MCF 10A (cell line): ENCODE measurements at regions of chr20 and their contacts with region 1.

Region 1: DNA sequence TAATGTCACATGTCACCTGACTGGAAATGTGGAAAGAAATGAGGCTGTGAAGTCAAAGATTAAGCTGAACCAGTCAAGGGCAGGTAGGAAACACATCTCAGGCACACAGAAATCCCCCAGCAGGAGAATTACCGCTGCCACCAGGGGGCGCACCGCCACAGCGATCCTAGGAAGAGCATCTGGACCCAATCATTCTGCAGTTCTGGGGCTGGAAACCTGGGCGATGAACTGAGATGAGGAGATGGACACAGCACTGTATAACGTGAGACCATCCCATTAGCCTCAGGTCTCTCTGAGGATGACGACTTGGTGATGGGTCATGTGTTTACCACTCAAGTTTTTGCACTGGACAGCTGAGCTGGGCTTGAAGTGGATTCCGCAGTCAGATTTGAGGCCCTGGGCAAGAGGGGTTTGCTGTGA is 6.5 kb upstream of the SLC24A3 start:
- DNase-seq: peak; percentile 69
- H3K4me3 Mint-ChIP-seq: no peak overlapping the region
- H3K27ac Mint-ChIP-seq: no peak overlapping the region
- H3K4me1 Mint-ChIP-seq: no peaks in the 10 kb centered on the region
- H3K27me3 Mint-ChIP-seq: peaks cover 25% of the 10 kb centered on the region
- CTCF ChIP-seq: peak; percentile 84

Region 2: DNA sequence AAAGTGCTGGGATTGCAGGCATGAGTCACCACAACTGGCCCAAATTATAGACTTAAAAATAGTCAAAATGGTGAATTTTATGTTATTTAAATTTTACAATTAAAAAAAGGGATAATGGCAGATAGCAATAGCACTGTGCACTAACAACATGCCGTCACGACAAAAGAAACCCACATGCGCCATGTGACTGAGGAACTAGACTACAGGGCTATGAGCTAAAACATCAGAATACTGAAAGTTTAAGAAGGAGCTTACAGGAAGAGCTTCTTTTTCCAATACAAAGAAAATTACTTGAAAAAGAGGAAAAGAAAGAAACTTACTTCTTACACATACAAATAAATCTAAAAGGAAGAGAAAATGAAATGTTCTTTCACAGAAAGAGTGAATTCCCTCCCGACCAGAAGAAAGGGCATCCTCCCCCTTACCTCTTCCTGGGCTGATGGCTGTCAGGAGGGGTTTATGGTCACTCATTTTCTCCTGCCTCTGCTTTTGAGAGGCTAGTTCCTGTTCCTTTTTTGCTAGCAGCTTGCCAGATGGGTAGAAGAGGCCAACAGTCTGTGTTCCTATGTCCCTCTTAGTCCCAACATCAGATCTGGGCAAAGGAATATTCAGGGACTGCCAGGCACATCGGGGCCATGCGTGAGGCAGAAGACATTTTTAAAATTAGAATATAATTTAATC is 793.6 kb before region 1 on chr20:
- CTCF ChIA-PET with region 1: interaction called, 3 read pairs
- POLR2A ChIA-PET with region 1: no interaction called
- intact Hi-C with region 1: loop called (anchors 10 kb)
- DNase-seq: no peak
- H3K4me3 Mint-ChIP-seq: no peak overlapping the region
- H3K27ac Mint-ChIP-seq: no peak overlapping the region
- H3K4me1 Mint-ChIP-seq: no peaks in the 10 kb centered on the region
- H3K27me3 Mint-ChIP-seq: no peaks in the 10 kb centered on the region
- CTCF ChIP-seq: no peak

Region 3: DNA sequence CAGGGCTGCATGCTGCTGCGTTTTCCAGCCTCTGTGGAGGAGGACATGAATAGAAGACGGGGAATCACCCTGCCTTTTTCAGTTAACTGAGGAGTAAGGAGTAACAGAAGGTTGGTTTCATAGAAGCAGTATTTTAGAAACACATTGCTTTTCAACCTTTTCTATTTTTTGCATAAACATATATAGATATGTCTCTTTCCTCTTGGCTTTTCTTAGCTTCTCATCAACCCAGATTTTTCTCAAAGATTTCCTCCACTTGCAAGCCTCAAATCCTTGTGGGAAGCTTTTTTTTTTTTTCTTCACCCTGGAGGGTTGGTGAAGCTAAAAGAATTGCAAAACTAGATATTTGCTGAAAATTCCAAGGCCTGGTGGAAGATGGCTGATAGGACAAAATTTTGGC is 12.4 kb after region 1 on chr20:
- CTCF ChIA-PET with region 1: interaction called, 38 read pairs
- POLR2A ChIA-PET with region 1: no interaction called
- intact Hi-C with region 1: no loop called
- DNase-seq: no peak
- H3K4me3 Mint-ChIP-seq: no peak overlapping the region
- H3K27ac Mint-ChIP-seq: no peak overlapping the region
- H3K4me1 Mint-ChIP-seq: no peaks in the 10 kb centered on the region
- H3K27me3 Mint-ChIP-seq: peaks cover 26% of the 10 kb centered on the region
- CTCF ChIP-seq: no peak

Region 4: DNA sequence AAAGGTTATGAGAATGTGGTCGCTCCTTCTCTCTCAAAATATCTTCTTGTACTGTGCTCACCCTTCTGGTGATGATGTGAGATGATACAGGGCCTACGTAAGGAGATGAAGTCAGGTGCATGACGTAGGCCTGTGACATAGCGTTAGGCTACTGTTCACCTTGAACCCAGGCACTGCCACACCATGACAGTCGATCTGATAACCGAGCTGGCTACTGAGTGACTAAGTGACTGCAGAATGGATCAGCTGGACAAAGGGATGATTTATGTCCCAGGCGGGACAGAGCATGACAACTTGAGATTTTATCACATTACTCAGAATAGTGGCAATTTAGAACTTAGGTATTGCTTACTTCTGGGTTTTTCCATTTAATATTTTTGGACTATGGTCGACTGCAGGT is 17.7 kb after region 1 on chr20:
- CTCF ChIA-PET with region 1: interaction called, 38 read pairs
- POLR2A ChIA-PET with region 1: no interaction called
- intact Hi-C with region 1: no loop called
- DNase-seq: no peak
- H3K4me3 Mint-ChIP-seq: no peak overlapping the region
- H3K27ac Mint-ChIP-seq: no peak overlapping the region
- H3K4me1 Mint-ChIP-seq: no peaks in the 10 kb centered on the region
- H3K27me3 Mint-ChIP-seq: peaks cover 12% of the 10 kb centered on the region
- CTCF ChIP-seq: no peak

Region 5: DNA sequence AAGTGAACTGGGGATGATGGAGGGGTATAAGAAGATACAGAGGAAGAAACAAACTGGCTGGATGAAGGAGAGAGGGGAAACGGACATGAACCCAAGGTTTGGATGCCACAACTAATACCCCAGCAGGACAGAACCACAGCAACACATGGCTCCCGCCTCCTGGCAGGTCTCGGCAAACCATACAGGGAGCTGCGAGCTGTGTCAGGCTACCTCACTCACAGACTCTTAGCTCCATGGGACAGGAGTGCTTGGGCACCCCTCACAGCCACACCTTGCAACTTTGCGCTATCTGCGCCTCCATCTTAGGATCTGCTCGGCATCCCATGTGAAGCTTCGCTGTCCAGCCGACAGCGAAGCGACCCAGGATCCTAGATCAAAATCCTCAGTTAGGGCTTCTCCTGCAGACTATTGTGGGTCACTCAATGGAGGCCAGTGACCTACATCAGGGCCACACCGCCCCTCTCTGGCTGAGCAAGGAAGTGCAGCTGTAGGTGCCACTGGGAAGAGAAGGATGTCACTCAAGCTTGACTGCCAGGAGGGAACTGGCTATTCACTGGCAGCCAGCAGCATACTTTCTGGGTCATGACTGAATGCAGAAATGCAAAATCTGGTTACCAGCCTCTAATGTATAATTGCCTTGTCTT is 377.7 kb after region 1 on chr20:
- CTCF ChIA-PET with region 1: interaction called, 7 read pairs
- POLR2A ChIA-PET with region 1: no interaction called
- intact Hi-C with region 1: loop called (anchors 1 kb)
- DNase-seq: peak; percentile 67
- H3K4me3 Mint-ChIP-seq: no peak overlapping the region
- H3K27ac Mint-ChIP-seq: no peak overlapping the region
- H3K4me1 Mint-ChIP-seq: no peaks in the 10 kb centered on the region
- H3K27me3 Mint-ChIP-seq: peaks cover 29% of the 10 kb centered on the region
- CTCF ChIP-seq: peak; percentile 81

Region 6: DNA sequence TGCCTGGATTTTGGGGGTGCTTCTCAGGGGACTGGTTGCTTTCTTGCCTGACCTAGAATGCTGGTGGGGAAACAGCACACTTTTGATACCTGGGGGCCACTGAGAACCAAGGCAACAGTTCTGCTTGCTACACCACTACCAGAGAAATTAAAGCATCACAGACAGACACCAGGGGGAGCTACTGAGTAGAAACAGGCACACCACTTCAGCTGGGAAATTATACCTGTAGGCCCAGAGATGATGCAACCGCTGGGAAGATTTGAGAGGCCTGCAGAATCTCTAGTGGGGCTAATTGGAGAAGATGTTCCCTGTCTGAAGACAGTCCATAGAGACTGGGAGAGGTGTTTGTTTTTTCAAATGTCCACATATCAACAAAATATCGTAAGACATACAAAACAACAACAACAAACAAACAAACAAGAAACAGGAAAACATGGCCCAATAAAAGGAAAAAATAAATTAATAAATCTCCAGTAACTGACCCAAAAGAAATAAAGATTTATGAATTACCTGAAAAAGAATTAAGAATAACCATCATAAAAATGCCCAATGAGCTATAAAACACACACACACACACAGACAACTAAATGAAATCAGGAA is 422.7 kb after region 1 on chr20:
- CTCF ChIA-PET with region 1: interaction called, 3 read pairs
- POLR2A ChIA-PET with region 1: no interaction called
- intact Hi-C with region 1: loop called (anchors 1 kb)
- DNase-seq: peak; percentile 87
- H3K4me3 Mint-ChIP-seq: no peak overlapping the region
- H3K27ac Mint-ChIP-seq: peak overlapping the region; percentile 49
- H3K4me1 Mint-ChIP-seq: no peaks in the 10 kb centered on the region
- H3K27me3 Mint-ChIP-seq: no peaks in the 10 kb centered on the region
- CTCF ChIP-seq: peak; percentile 84

Region 7: DNA sequence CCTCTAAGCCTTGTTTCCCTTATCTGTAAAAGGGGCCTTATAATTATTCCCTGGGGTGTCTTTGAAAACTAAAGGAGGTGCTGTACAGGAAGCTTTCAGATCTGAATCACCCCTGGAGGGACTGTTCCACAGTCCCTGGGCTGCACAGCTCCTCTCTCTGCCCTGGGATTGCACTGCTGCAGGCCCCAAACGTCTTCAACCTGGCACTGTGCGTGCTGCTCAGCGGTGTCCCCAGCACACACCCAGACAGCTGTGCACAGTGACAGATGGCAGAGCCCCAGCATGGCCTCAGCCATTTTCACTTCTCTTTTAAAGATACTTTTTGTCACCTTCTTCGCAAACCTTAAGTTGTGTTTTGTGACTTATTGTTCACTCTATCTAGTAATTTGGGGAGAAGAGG is 1111.2 kb after region 1 on chr20:
- CTCF ChIA-PET with region 1: no interaction called
- POLR2A ChIA-PET with region 1: no interaction called
- intact Hi-C with region 1: no loop called
- DNase-seq: no peak
- H3K4me3 Mint-ChIP-seq: no peak overlapping the region
- H3K27ac Mint-ChIP-seq: no peak overlapping the region
- H3K4me1 Mint-ChIP-seq: no peaks in the 10 kb centered on the region
- H3K27me3 Mint-ChIP-seq: no peaks in the 10 kb centered on the region
- CTCF ChIP-seq: no peak